ENCODE measurements at regions of chr3 and their contacts with region 1.

Region 1: DNA sequence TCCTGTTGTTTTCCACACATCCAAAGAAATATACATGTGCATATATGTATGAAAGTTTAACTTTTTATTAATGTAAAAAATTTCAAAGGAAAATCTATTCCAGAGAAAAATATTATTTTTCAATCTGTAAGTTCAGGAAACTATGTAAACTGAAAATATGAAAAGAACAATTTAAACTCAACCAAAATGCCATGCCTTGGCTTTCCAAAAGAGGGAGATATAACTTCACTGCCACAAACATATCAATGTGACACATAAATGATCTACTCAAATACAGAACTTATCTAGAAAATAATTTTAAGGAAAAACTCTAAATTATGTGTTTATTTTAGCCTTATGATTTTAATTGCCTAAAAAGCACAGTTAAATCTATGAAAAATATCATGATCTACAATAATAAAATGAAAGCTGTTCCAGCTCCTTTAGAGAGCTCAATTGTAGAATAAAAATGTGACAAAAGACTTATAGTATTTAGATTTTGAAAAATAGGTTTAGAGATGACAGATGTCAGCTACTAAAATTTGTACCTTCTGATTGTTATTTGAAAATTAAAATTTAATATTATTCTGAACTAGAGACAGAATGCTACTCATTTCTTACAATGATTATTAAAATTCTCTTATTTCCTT is 94.8 kb downstream of the GBE1 start:
- DNase-seq: no peak
- H3K4me3 Mint-ChIP-seq: no peak overlapping the region
- H3K27ac Mint-ChIP-seq: no peak overlapping the region
- H3K4me1 Mint-ChIP-seq: no peaks in the 10 kb centered on the region
- H3K27me3 Mint-ChIP-seq: no peaks in the 10 kb centered on the region
- CTCF ChIP-seq: no peak

Region 2: GRCh38 chr3:81716870-81717509 is 50.4 kb after region 1 on chr3:
- CTCF ChIA-PET with region 1: no interaction called
- intact Hi-C with region 1: loop called (anchors 5 kb)
- DNase-seq: peak; percentile 36
- H3K4me3 Mint-ChIP-seq: no peak overlapping the region
- H3K27ac Mint-ChIP-seq: peak overlapping the region; percentile 63
- H3K4me1 Mint-ChIP-seq: no peaks in the 10 kb centered on the region
- H3K27me3 Mint-ChIP-seq: no peaks in the 10 kb centered on the region
- CTCF ChIP-seq: no peak

Region 3: DNA sequence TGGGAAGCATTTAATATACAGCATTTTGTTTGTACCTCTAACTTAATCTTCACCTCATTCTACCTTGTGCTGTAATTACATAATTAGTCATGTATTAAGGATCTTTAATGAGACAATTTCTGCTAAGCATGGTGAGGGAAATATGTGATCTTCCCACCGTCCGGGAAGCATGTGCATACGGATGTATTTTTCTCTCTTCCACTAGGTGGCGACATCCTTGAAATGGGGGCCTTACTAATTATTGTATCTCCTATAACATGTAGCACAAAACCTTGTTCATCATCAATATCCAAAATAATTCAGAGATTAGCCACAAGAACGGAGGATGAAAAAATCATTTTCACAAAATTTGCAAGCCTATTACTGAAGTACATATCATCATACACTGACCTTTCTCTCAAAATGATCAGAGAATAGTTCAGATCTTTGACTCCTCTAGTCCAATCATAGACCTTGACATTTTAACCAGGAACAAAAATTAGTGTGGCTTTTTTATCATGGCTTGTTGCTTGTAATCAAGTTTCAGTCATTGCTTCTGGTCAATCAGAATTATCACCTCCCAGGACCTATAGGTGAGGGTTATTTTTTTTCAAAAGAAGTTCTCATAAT is 243.7 kb after region 1 on chr3:
- CTCF ChIA-PET with region 1: no interaction called
- intact Hi-C with region 1: loop called (anchors 2 kb)
- DNase-seq: peak; percentile 32
- H3K4me3 Mint-ChIP-seq: no peak overlapping the region
- H3K27ac Mint-ChIP-seq: no peak overlapping the region
- H3K4me1 Mint-ChIP-seq: no peaks in the 10 kb centered on the region
- H3K27me3 Mint-ChIP-seq: no peaks in the 10 kb centered on the region
- CTCF ChIP-seq: peak; percentile 44